Esophagus muscularis mucosa (tissue), 4 donors: ENCODE measurements at regions of chr15 and their contacts with region 1.

Region 1: DNA sequence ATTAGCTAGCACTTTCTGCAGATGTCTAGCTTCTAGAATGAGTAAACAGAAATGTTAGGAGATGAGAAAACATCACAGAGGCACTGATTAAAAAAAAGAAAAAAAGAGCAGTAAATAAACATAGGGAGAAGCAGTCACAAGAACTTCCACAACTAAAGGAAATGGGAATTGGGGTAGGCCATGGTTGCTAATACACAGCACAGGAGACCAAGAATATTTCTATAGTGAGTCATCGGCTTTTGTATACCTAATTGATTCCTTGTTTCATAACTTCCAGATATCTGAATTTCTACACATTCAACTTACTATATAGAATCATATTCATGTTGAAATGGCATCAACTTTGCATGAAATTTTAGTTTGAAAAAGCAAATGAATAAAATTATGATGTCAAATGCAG is 47.3 kb upstream of the TCF12 start:
- DNase-seq: no peak
- H3K4me3 ChIP-seq: no peak overlapping the region
- H3K27ac ChIP-seq: no peak overlapping the region
- H3K4me1 ChIP-seq: peaks cover 0 to 34% (median 28%) of the 10 kb centered on the region in 4 donors
- H3K27me3 ChIP-seq: no peaks in the 10 kb centered on the region
- CTCF ChIP-seq: no peak
- EP300 ChIP-seq: no peak
- POLR2A ChIP-seq: no peak

Region 2: GRCh38 chr15:56496635-56497034 is 374.5 kb before region 1 on chr15:
- intact Hi-C with region 1: loop called (anchors 5 kb)
- DNase-seq: no peak
- H3K4me3 ChIP-seq: peak overlapping the region in 3 of 4 donors; percentile 13 to 23 (median 15)
- H3K27ac ChIP-seq: no peak overlapping the region
- H3K4me1 ChIP-seq: peaks cover 0 to 6% (median 3%) of the 10 kb centered on the region in 4 donors
- H3K27me3 ChIP-seq: no peaks in the 10 kb centered on the region
- CTCF ChIP-seq: peak; percentile 71 to 76 (median 71)
- EP300 ChIP-seq: no peak
- POLR2A ChIP-seq: no peak

Region 3: GRCh38 chr15:56929399-56929798 is 58.2 kb after region 1 on chr15:
- intact Hi-C with region 1: no loop called
- DNase-seq: no peak
- H3K4me3 ChIP-seq: no peak overlapping the region
- H3K27ac ChIP-seq: peak overlapping the region in 1 of 4 donors; percentile 51
- H3K4me1 ChIP-seq: peaks cover 66 to 95% (median 84%) of the 10 kb centered on the region in 4 donors
- H3K27me3 ChIP-seq: no peaks in the 10 kb centered on the region
- CTCF ChIP-seq: no peak
- EP300 ChIP-seq: no peak
- POLR2A ChIP-seq: no peak